Calu3 (cell line): ENCODE measurements at regions of chr12 and their contacts with region 1.

Region 1: GRCh38 chr12:11730299-11731041 is 81.0 kb downstream of the ETV6 start:
- DNase-seq: peak; percentile 81
- H3K4me3 Mint-ChIP-seq: peak overlapping the region; percentile 58
- H3K27ac Mint-ChIP-seq: peak overlapping the region; percentile 98
- H3K4me1 Mint-ChIP-seq: peaks cover 60% of the 10 kb centered on the region
- H3K27me3 Mint-ChIP-seq: no peaks in the 10 kb centered on the region
- CTCF ChIP-seq: no peak

Region 2: DNA sequence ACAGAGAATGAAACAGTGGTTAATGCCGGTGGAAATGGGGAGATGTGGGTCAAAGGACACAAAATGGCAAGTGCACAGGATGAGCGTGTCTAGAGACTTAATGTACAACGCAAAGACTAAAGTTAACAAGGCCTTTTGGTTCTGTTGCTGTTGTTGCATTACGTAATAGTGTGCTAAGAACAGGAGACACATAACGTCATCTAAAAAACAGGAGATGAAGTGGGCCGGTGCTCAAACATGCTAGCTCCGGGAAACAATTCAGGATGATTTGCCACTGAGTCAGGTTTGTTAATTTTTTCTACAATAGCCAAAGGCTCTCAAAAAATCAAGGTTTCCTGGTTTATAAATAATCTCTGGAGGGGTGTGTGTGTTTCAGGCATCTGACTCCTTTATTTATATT is 25.5 kb before region 1 on chr12:
- CTCF ChIA-PET with region 1: interaction called, 6 read pairs
- intact Hi-C with region 1: loop called (anchors 2 kb)
- DNase-seq: peak; percentile 52
- H3K4me3 Mint-ChIP-seq: no peak overlapping the region
- H3K27ac Mint-ChIP-seq: peak overlapping the region; percentile 74
- H3K4me1 Mint-ChIP-seq: peaks cover 94% of the 10 kb centered on the region
- H3K27me3 Mint-ChIP-seq: no peaks in the 10 kb centered on the region
- CTCF ChIP-seq: no peak